ENCODE measurements at regions of chr12 and their contacts with region 1.

Region 1: GRCh38 chr12:22665476-22665875 is 40.5 kb downstream of the ETNK1 start:
- DNase-seq: no peak
- H3K4me3 ChIP-seq: no peak overlapping the region
- H3K27ac ChIP-seq: no peak overlapping the region
- H3K4me1 ChIP-seq: no peaks in the 10 kb centered on the region
- CTCF ChIP-seq: no peak

Region 2: DNA sequence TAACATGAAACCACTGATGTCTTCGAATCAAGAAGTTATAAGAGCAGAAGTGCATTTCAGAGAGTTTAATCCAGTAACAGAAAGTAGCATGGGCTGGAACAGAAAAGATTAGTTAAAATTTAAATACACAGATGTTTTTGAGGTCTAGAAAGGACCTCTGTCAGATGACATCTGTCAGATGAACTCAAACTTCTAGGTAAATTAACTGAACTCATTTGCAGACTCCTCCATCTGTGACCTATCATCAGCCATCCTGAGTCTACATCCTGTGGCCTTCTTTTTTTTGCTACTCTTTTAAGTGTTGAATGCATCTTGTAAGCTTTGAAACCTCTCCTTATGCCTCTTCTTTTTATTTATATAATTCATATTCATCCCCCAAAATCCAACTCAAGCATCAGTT is 174.4 kb before region 1 on chr12:
- CTCF ChIA-PET with region 1: no interaction called
- POLR2A ChIA-PET with region 1: no interaction called
- intact Hi-C with region 1: no loop called
- DNase-seq: peak; percentile 25
- H3K4me3 ChIP-seq: no peak overlapping the region
- H3K27ac ChIP-seq: peak overlapping the region; percentile 16
- H3K4me1 ChIP-seq: peaks cover 9% of the 10 kb centered on the region
- CTCF ChIP-seq: no peak

Region 3: GRCh38 chr12:22641353-22642053 is 24.0 kb before region 1 on chr12:
- CTCF ChIA-PET with region 1: no interaction called
- POLR2A ChIA-PET with region 1: interaction called, 10 read pairs
- intact Hi-C with region 1: no loop called
- DNase-seq: no peak
- H3K4me3 ChIP-seq: no peak overlapping the region
- H3K27ac ChIP-seq: no peak overlapping the region
- H3K4me1 ChIP-seq: no peaks in the 10 kb centered on the region
- CTCF ChIP-seq: no peak

Region 4: GRCh38 chr12:23115984-23116383 is 450.5 kb after region 1 on chr12:
- CTCF ChIA-PET with region 1: no interaction called
- POLR2A ChIA-PET with region 1: no interaction called
- intact Hi-C with region 1: no loop called
- DNase-seq: no peak
- H3K4me3 ChIP-seq: no peak overlapping the region
- H3K27ac ChIP-seq: no peak overlapping the region
- H3K4me1 ChIP-seq: no peaks in the 10 kb centered on the region
- CTCF ChIP-seq: no peak